IMR-90 (cell line): ENCODE measurements at regions of chrX and their contacts with region 1.

Region 1: DNA sequence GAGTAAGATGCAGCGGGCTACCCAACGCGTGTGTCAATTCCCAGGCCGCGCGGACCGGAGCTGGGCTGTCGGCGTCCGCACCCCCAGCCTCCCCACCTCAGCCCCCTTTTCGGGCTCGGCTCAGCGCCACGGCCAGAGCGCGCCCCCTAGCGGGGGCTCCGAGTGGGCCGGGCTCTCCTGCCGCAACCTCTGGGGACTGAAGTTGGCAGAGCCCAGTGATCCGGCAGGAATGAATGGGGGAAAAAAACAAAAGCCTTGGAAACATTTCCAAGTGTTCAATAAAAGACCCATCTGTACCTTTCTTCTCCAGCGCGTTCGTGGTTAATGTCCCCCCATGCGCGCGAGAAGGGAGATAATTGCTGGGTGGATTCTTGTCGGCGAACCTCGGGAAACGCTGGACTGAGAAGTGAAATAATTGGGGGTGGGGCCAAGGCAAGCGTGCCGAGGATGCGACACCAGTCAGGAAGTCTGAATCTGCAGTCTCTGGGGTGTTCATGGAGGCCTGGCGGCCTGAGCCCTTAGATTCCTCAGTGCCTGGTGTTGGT is 5.2 kb upstream of the ARX start:
- DNase-seq: no peak
- ATAC-seq: peak; percentile 32; the same call in 1 of the 2 replicates
- H3K4me3 ChIP-seq: no peak overlapping the region
- H3K27ac ChIP-seq: no peak overlapping the region
- H3K4me1 ChIP-seq: no peaks in the 10 kb centered on the region; the same call in 1 of the 2 replicates
- H3K27me3 ChIP-seq: peaks cover 81% of the 10 kb centered on the region
- CTCF ChIP-seq: peak; percentile 43
- POLR2A ChIP-seq: no peak
- RAD21 ChIP-seq: peak; percentile 36

Region 2: DNA sequence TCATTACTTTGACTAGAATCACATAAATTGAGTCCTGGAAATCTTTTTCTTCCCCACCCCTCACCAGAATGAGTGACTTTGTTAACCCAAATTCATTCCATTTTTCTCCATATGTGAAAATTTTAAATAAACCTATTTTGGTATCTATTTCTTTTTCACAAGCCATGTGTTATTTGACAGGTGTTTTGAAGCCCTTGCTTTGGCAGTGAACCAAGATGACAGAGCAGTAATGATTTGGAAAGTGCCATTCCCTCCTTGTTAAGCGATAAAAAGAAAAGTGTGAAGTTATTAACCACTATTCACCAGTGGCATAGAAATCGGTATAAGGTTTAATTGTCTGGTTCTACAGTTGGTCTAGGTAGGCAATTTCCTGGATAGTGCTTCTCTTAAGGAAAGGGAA is 261.2 kb before region 1 on chrX:
- CTCF ChIA-PET with region 1: no interaction called
- POLR2A ChIA-PET with region 1: no interaction called
- dilution Hi-C with region 1: no loop called
- in situ Hi-C with region 1: no loop called
- intact Hi-C with region 1: loop called (anchors 10 kb)
- DNase-seq: no peak
- ATAC-seq: no peak
- H3K4me3 ChIP-seq: no peak overlapping the region
- H3K27ac ChIP-seq: no peak overlapping the region
- H3K4me1 ChIP-seq: no peaks in the 10 kb centered on the region
- H3K27me3 ChIP-seq: no peaks in the 10 kb centered on the region
- CTCF ChIP-seq: no peak
- POLR2A ChIP-seq: no peak
- RAD21 ChIP-seq: no peak

Region 3: GRCh38 chrX:24920769-24921168 is 100.2 kb before region 1 on chrX:
- CTCF ChIA-PET with region 1: no interaction called
- POLR2A ChIA-PET with region 1: no interaction called
- dilution Hi-C with region 1: no loop called
- in situ Hi-C with region 1: no loop called
- intact Hi-C with region 1: no loop called
- DNase-seq: no peak
- ATAC-seq: no peak
- H3K4me3 ChIP-seq: no peak overlapping the region
- H3K27ac ChIP-seq: no peak overlapping the region
- H3K4me1 ChIP-seq: no peaks in the 10 kb centered on the region
- H3K27me3 ChIP-seq: no peaks in the 10 kb centered on the region; the same call in 1 of the 2 replicates
- CTCF ChIP-seq: no peak
- POLR2A ChIP-seq: no peak
- RAD21 ChIP-seq: no peak